ENCODE measurements at regions of chr2 and their contacts with region 1.

Region 1: DNA sequence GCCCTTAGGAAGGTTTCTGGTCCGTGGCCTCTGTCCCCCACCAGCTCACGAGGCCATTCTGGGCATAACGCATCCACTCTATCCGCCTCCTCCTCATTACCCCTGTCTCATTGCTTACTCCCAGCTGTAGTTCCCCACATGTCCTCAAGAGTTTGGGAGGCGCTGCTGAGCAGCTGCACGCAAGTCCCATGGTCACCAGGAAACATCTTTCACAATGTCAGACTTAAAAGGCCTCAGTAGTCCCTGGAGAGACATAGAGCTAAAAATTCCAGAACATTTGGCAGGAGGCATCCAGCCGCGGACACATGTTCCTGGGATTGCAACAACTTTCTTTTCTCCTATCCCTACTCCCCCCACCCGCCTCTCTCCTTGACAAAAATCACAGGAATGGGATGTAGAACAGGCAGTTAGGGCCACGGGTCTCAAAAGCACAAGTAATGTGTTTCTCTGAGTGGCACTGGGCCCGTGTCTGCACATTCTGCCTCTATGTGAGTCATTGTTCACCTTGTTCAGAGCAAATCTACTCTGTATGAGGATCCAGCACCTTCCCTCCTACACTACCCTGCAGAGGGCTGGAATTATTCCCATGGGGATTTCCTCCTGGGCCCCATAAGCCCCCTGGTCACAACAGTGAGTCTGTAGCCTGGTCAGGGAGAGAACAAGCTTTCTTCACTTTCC is 8.1 kb downstream of the LBH start:
- DNase-seq: peak; percentile 49 to 91 (median 71)
- ATAC-seq: peak; percentile 79
- H3K4me3 ChIP-seq: peak overlapping the region; percentile 12
- H3K4me3 Mint-ChIP-seq: peak overlapping the region; percentile 82
- H3K27ac ChIP-seq: peak overlapping the region in 1 of 2 donors; percentile 42
- H3K27ac Mint-ChIP-seq: peak overlapping the region; percentile 99
- H3K4me1 ChIP-seq: peaks cover 89% of the 10 kb centered on the region
- H3K4me1 Mint-ChIP-seq: peaks cover 96% of the 10 kb centered on the region
- H3K27me3 ChIP-seq: no peaks in the 10 kb centered on the region
- H3K27me3 Mint-ChIP-seq: no peaks in the 10 kb centered on the region
- CTCF ChIP-seq: peak; percentile 85

Region 2: GRCh38 chr2:28445448-28446258 is 1793.8 kb before region 1 on chr2:
- CTCF ChIA-PET with region 1: no interaction called
- POLR2A ChIA-PET with region 1: no interaction called
- intact Hi-C with region 1: no loop called
- DNase-seq: peak in 2 of 14 experiments; percentile 48 to 66
- ATAC-seq: no peak
- H3K4me3 ChIP-seq: no peak overlapping the region
- H3K4me3 Mint-ChIP-seq: no peak overlapping the region
- H3K27ac ChIP-seq: no peak overlapping the region
- H3K27ac Mint-ChIP-seq: no peak overlapping the region
- H3K4me1 ChIP-seq: peaks cover 3% of the 10 kb centered on the region
- H3K4me1 Mint-ChIP-seq: no peaks in the 10 kb centered on the region
- H3K27me3 ChIP-seq: no peaks in the 10 kb centered on the region
- H3K27me3 Mint-ChIP-seq: no peaks in the 10 kb centered on the region
- CTCF ChIP-seq: no peak

Region 3: DNA sequence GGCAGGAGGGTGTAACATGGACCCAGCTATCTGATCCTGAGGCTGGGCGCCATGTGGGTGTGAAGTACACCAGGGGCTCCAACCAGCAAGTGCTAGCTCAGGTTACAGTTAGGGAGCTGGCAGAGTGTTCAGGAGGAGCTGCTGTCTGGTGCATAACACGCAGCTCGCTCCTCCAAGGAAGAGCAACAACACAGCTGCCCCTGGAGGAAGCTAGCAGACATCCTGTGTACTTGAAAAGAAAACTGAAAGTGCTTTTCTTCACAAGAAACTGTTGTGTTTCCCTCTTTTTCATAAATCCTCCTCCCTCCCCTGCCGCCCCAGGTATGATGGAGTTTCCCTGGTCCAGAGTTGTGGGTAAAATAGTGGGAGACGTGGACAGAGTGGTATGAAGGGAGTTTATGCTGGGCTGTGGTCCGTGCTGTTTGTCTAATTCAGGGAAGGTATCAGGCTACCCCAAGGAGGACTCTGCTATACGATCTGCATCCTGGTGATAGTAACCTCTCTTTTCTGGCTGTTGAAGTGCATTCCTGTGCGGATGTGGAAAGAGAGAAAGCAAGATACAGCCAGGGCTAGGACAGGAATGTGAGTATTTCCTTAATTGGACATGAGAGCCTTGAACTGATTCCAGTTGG is 14.2 kb before region 1 on chr2:
- CTCF ChIA-PET with region 1: interaction called, 25 read pairs
- POLR2A ChIA-PET with region 1: interaction called, 83 read pairs
- intact Hi-C with region 1: no loop called
- DNase-seq: peak; percentile 28 to 85 (median 50)
- ATAC-seq: peak; percentile 84
- H3K4me3 ChIP-seq: peak overlapping the region; percentile 65
- H3K4me3 Mint-ChIP-seq: peak overlapping the region; percentile 97
- H3K27ac ChIP-seq: peak overlapping the region; percentile 92 to 94
- H3K27ac Mint-ChIP-seq: peak overlapping the region; percentile 99
- H3K4me1 ChIP-seq: peaks cover 71% of the 10 kb centered on the region
- H3K4me1 Mint-ChIP-seq: peaks cover 81% of the 10 kb centered on the region
- H3K27me3 ChIP-seq: no peaks in the 10 kb centered on the region
- H3K27me3 Mint-ChIP-seq: no peaks in the 10 kb centered on the region
- CTCF ChIP-seq: no peak

Region 4: DNA sequence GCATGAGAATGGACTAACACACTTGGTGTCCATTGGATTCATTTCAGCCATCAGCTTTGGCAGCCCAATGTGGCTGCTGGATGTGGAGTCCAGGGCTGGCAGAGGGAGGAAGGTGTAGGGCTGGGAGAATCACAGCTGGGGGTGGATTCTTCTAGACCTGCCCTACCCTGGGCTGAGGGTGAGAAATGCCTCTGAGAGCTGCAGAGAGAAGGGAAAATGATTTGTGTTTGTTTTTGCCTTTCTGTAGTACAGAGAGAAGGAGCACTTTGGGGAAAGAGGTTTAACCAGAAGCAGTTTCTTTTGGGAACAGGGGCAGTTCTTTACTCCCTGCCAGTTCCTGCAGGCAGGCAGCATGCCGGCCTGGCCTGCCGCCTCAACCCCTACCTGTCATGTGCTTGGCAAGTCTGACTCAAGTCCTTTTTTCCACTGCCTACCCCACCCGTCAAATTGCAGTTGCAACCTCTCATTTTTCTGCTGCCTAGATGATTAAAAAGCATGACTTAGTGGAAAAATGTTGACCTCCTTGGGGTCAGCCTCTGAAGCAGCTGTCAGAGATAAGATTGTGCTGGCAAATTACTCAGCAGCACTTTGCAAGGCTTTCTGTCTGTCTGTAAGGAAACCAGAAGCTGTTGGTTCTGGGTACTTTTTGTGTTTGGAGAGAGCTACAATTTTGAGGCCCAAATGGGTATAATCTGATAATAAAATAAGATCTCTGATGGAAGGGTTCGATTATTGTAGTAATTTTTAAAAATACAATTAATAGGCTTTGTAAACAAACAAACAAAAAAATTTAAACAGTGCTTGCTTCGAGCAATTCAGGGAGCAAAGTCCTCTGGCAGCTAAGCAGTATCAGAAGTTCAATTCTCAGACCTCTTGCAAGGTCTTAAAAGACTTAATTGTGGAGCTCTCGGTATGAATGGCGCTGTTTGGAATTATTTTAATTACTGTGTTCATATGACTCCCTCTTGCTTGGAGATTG is 13.6 kb after region 1 on chr2:
- CTCF ChIA-PET with region 1: interaction called, 12 read pairs
- POLR2A ChIA-PET with region 1: interaction called, 373 read pairs
- intact Hi-C with region 1: loop called (anchors 2 kb)
- DNase-seq: peak in 7 of 14 experiments; percentile 33 to 63 (median 45)
- ATAC-seq: peak; percentile 37
- H3K4me3 ChIP-seq: no peak overlapping the region
- H3K4me3 Mint-ChIP-seq: peak overlapping the region; percentile 57
- H3K27ac ChIP-seq: peak overlapping the region; percentile 70 to 79
- H3K27ac Mint-ChIP-seq: peak overlapping the region; percentile 99
- H3K4me1 ChIP-seq: peaks cover 98% of the 10 kb centered on the region
- H3K4me1 Mint-ChIP-seq: peaks cover 94% of the 10 kb centered on the region
- H3K27me3 ChIP-seq: no peaks in the 10 kb centered on the region
- H3K27me3 Mint-ChIP-seq: no peaks in the 10 kb centered on the region
- CTCF ChIP-seq: no peak

Region 5: GRCh38 chr2:30412971-30413570 is 173.6 kb after region 1 on chr2:
- CTCF ChIA-PET with region 1: no interaction called
- POLR2A ChIA-PET with region 1: no interaction called
- intact Hi-C with region 1: no loop called
- DNase-seq: no peak
- ATAC-seq: no peak
- H3K4me3 ChIP-seq: no peak overlapping the region
- H3K4me3 Mint-ChIP-seq: no peak overlapping the region
- H3K27ac ChIP-seq: no peak overlapping the region
- H3K27ac Mint-ChIP-seq: no peak overlapping the region
- H3K4me1 ChIP-seq: peaks cover 5% of the 10 kb centered on the region
- H3K4me1 Mint-ChIP-seq: peaks cover 25% of the 10 kb centered on the region
- H3K27me3 ChIP-seq: no peaks in the 10 kb centered on the region
- H3K27me3 Mint-ChIP-seq: no peaks in the 10 kb centered on the region
- CTCF ChIP-seq: no peak

Measured in CD4-positive, alpha-beta T cell (primary cell).